ENCODE measurements at regions of chr4 and their contacts with region 1.

Region 1: DNA sequence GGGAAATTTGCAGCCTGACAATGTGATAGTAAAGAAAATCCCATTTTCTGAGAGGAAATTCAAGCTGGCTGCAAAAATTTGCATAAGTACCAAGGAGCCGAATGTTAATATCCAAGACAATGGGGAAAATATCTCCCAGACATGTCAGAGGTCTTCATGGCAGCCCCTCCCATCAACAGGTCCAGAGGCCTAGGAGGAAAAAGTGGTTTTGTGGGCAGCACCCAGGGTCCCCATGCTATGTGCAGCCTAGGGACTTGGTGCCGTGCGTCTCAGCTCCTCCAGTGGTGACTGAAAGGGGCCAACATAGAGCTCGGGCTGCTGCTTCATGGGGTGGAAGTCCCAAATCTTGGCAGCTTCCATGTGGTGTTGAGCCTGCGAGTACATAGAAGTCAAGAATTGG is 6.3 kb upstream of the UGDH start:
- DNase-seq: no peak
- H3K4me3 ChIP-seq: no peak overlapping the region
- H3K27ac ChIP-seq: no peak overlapping the region
- H3K4me1 ChIP-seq: peaks cover 22% of the 10 kb centered on the region
- H3K27me3 ChIP-seq: no peaks in the 10 kb centered on the region
- CTCF ChIP-seq: no peak

Region 2: GRCh38 chr4:39574946-39575345 is 41.4 kb after region 1 on chr4:
- CTCF ChIA-PET with region 1: no interaction called
- POLR2A ChIA-PET with region 1: interaction called, 10 read pairs
- intact Hi-C with region 1: no loop called
- DNase-seq: no peak
- H3K4me3 ChIP-seq: no peak overlapping the region
- H3K27ac ChIP-seq: peak overlapping the region; percentile 50
- H3K4me1 ChIP-seq: peaks cover 19% of the 10 kb centered on the region
- H3K27me3 ChIP-seq: no peaks in the 10 kb centered on the region
- CTCF ChIP-seq: no peak